AG04450 (cell line): ENCODE measurements at regions of chr3 and their contacts with region 1.

Region 1: DNA sequence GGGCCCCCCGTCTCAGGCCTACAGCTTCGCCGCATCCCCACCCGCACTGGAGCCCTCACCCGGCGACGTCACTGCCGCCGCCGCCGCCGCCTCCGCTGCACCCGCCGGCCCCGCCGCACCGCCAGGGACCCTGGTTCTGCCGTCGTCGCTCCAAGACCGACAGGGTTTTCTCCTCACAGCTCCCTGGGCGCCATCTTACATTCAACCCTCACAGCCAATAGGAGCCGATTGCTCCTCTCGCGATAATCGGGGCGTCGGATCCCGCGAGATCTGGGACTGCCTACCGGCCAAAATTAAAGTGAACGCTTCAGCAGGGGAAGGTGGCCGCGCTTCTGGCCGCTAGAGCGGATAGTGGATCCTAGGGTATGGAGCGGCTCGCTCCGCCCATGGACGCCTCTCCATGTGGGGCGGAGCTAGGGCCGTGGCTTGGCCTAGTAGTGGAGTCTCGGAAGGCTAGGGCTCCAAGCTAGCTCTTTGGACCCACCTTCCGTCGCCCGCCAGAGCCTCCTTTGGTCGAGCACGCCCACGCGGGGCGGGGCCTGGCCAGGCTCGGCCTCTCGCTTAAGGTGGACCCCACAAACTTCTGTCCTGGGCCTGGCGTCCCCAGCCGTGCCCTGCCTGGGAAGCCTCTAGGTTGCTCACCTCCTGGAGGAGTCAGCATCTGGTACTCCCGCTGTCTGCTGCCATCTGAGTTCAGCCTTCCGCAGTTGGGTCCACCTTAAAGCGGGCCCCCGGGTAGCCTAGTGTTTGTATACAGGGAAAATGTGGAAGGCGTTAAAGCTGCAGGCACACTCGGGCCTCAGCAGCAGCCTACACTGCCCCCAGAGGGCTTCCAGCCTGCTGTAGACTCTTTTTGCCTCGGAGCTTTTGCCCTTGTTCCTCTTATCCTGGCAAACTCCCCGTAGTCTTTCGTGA is at the start of gene QRICH1:
- DNase-seq: peak; percentile 97
- H3K4me3 ChIP-seq: peak within 1 kb of the TSS; percentile 99
- H3K27ac ChIP-seq: peak within 1 kb of the TSS; percentile 98
- H3K27me3 ChIP-seq: no peaks in the 10 kb centered on the region
- CTCF ChIP-seq: peak; percentile 72
- polyA plus RNA-seq, gene QRICH1: 68.6 and 69.7 TPM in 2 replicates

Region 2: DNA sequence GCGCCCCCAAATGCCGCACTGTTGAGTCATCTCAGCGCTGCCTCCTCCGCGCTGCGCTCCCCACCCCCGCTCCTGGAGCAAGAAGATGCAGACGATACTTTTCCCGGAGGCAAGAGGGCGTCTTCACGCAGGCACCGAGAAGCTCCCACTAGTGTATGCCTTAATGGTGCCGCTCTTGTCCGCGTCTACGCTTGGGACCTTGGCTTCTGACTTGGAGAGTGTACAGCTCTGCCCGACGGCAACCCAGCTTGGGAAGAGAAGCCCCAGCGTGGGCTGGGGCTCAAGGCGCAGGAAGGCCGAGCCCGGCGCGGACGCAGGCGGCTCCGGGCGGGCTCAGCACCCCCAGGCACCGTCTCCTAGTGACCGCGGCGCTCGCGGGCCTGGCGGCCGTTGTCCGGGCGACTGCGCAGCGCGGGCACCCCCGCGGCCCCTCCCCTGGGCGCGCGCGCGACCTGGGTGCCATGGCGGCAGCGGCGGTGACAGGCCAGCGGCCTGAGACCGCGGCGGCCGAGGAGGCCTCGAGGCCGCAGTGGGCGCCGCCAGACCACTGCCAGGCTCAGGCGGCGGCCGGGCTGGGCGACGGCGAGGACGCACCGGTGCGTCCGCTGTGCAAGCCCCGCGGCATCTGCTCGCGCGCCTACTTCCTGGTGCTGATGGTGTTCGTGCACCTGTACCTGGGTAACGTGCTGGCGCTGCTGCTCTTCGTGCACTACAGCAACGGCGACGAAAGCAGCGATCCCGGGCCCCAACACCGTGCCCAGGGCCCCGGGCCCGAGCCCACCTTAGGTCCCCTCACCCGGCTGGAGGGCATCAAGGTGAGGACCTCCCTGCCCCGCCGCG is 104.1 kb before region 1 on chr3 and contains the start of gene P4HTM:
- CTCF ChIA-PET with region 1: interaction called, 37 read pairs
- POLR2A ChIA-PET with region 1: interaction called, 16 read pairs
- DNase-seq: peak; percentile 87
- H3K4me3 ChIP-seq: peak within 1 kb of the TSS; percentile 80
- H3K27ac ChIP-seq: peak within 1 kb of the TSS; percentile 99
- H3K27me3 ChIP-seq: no peaks in the 10 kb centered on the region
- CTCF ChIP-seq: peak; percentile 59
- polyA plus RNA-seq, gene P4HTM: 18.2 and 22.5 TPM in 2 replicates

Region 3: GRCh38 chr3:49021813-49022687 is 72.1 kb before region 1 on chr3 and contains the start of gene NDUFAF3:
- CTCF ChIA-PET with region 1: interaction called, 18 read pairs
- POLR2A ChIA-PET with region 1: interaction called, 45 read pairs
- DNase-seq: peak; percentile 81
- H3K4me3 ChIP-seq: peak within 1 kb of the TSS; percentile 98
- H3K27ac ChIP-seq: peak within 1 kb of the TSS; percentile 90
- H3K27me3 ChIP-seq: no peaks in the 10 kb centered on the region
- CTCF ChIP-seq: peak; percentile 90
- polyA plus RNA-seq, gene NDUFAF3: 47.0 and 69.2 TPM in 2 replicates

Region 4: GRCh38 chr3:49081429-49081828 is 12.7 kb before region 1 on chr3:
- CTCF ChIA-PET with region 1: interaction called, 9 read pairs
- POLR2A ChIA-PET with region 1: interaction called, 11 read pairs
- DNase-seq: no peak
- H3K4me3 ChIP-seq: no peak overlapping the region
- H3K27ac ChIP-seq: no peak overlapping the region
- H3K27me3 ChIP-seq: no peaks in the 10 kb centered on the region
- CTCF ChIP-seq: no peak

Region 5: DNA sequence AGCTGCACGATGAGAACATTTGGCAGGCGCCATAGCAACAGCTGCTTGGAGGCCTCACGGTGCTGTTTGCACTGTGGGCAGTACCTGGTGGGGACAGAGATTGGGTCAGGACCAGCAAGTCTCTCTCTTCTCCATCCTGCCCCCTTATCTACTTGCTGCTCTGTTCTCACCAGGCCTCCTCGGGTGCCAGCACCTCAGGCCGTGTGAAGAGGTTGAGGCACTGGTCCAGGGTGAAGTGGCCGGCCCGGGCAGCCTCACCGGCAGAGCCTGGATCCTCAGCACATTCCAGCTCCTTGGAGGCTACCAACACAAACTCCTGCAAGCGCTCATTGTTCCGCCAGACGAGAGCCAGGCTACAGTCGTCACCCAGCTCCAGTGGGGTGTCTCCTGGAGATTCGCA is 16.7 kb after region 1 on chr3:
- CTCF ChIA-PET with region 1: interaction called, 4 read pairs
- POLR2A ChIA-PET with region 1: interaction called, 20 read pairs
- DNase-seq: no peak
- H3K4me3 ChIP-seq: no peak overlapping the region
- H3K27ac ChIP-seq: no peak overlapping the region
- H3K27me3 ChIP-seq: no peaks in the 10 kb centered on the region
- CTCF ChIP-seq: no peak

Region 6: DNA sequence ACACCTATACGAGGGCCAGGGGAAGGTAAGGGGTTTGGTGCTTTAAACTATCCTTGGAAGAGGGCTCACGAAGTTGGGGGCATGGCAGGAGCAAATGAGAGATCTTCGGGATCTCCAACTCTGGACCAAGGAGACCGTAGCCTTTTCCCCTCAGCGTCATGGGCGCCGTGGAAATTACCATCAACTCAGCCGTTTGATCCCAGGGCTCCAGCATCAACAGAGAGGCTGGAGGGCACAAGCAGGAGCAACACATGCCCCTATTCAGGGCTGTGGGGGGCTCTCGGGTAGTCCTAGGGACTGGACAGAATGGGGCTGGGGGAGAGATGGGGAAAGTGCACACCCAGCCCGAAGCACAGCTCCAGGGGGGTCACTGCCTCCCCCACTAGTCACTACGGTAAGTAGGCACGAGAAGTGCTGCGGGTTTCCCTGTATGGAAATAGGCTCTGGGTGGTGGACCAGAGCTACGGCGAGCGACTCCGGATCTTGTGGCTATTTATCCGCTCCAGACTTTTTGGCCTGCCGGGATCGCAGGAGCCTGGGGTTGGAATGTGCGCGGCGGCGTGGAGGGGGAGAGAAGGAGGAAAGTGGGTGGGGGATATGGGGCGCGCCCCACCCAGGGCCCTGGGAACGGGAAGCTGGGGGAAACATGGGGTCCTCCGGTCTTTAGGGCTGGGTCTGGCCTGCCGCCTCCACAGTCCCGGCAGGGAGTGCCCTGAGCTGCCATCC is 39.3 kb after region 1 on chr3:
- CTCF ChIA-PET with region 1: interaction called, 4 read pairs
- POLR2A ChIA-PET with region 1: interaction called, 39 read pairs
- DNase-seq: peak; percentile 69
- H3K4me3 ChIP-seq: peak overlapping the region; percentile 89
- H3K27ac ChIP-seq: peak overlapping the region; percentile 49
- H3K27me3 ChIP-seq: no peaks in the 10 kb centered on the region
- CTCF ChIP-seq: no peak